ENCODE measurements at regions of chr1 and their contacts with region 1.

Region 1: GRCh38 chr1:153783233-153784190 is 8.3 kb downstream of the SLC27A3 start:
- DNase-seq: peak; percentile 84 to 96 (median 91)
- ATAC-seq: peak; percentile 98
- H3K4me3 ChIP-seq: peak overlapping the region; percentile 91 to 93
- H3K4me3 Mint-ChIP-seq: peak overlapping the region; percentile 88
- H3K27ac ChIP-seq: peak overlapping the region; percentile 92 to 99
- H3K27ac Mint-ChIP-seq: peak overlapping the region; percentile 95
- H3K4me1 ChIP-seq: peaks cover 12% of the 10 kb centered on the region
- H3K4me1 Mint-ChIP-seq: peaks cover 10% of the 10 kb centered on the region
- H3K27me3 ChIP-seq: no peaks in the 10 kb centered on the region
- H3K27me3 Mint-ChIP-seq: no peaks in the 10 kb centered on the region
- CTCF ChIP-seq: no peak

Region 2: DNA sequence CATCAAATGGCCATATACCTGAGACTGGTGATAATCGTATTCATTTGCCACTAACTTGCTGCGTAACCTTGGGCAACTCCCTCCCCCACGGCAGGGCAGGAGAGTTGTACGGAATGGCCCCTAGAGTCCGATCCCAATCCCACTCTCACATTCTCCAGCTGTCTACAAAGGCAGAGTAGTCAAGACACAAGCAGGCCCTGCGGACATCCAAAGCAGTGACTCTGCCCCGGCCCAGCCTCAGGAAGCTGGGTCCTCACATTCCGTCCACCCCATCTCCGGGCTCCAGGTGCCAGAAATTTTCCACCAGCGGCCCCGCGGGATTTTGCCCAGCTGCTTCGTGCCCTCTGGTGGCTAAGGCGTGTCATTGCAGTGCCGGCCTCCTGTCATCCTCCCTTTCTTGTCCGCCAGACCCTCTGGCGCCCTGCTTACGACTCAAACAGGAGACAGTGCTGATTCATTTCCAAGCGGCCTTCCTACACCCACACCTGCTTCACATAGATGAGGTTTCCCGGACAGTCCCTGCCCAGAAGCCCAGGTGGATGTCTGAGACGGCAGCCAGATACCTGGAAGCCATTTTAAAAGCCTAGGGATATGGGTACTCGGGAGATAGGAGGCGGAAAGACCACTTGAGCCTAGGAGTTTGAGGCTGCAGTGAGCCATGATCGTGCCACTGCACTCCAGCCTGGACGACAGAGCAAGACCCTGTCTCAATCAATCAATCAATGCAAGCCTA is 215.0 kb before region 1 on chr1:
- CTCF ChIA-PET with region 1: no interaction called
- POLR2A ChIA-PET with region 1: no interaction called
- intact Hi-C with region 1: no loop called
- DNase-seq: peak; percentile 63 to 89 (median 83)
- ATAC-seq: peak; percentile 66
- H3K4me3 ChIP-seq: no peak overlapping the region
- H3K4me3 Mint-ChIP-seq: peak overlapping the region; percentile 67
- H3K27ac ChIP-seq: no peak overlapping the region
- H3K27ac Mint-ChIP-seq: no peak overlapping the region
- H3K4me1 ChIP-seq: peaks cover 17% of the 10 kb centered on the region
- H3K4me1 Mint-ChIP-seq: peaks cover 26% of the 10 kb centered on the region
- H3K27me3 ChIP-seq: no peaks in the 10 kb centered on the region
- H3K27me3 Mint-ChIP-seq: peaks cover 8% of the 10 kb centered on the region
- CTCF ChIP-seq: peak; percentile 99

Region 3: DNA sequence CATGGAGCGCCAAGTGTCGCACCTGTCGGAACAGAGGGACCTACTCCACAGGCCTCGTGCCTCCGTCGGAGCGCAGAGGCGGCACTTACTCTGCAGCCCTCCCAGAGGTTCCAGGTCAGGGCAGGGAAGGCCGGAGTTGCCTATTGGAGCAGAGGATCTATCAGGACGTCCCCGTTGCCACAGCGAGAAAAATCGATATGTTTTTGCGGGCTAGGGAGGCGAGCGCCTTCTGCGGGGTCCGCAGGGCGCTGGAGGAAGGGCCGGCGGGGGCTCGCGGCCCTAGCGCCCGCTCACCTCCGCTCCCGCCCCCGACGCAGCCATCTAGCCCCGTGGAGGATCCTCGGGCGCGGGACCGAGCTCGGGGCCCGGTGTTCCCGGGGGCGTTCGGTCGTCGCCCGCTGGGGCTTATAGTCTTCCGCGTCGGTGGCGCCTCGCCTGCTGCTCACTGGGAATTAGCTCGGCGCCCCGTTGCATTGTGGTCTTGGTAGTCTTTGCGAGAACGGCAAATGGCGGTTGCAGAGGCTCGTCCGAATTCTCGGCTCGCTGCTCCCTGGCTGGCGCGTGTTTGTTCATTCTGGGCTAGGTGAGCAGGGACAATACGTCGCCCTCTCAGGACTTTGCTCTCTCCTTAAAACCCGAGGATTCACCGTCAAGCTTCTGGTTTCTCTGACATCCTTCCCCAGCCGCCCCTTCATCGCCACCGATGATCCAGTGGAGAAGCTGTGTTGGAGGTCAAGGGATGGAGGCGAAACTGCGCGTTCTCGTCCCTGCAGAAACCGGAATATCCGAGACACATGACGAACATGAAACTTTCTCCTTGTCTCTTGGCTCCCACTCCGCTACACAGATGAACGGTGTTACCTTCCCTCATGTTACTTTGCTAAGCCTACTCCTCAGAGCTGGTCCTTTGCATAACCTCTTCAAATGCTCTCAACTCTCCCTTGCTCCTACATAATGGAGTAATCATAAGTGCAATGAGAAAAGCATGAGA is 194.0 kb after region 1 on chr1 and contains the start of gene JTB:
- CTCF ChIA-PET with region 1: no interaction called
- POLR2A ChIA-PET with region 1: no interaction called
- intact Hi-C with region 1: loop called in 1 of 2 experiments (anchors 1 kb)
- DNase-seq: peak; percentile 62 to 91 (median 86)
- ATAC-seq: peak; percentile 95
- H3K4me3 ChIP-seq: peak within 1 kb of the TSS; percentile 92 to 97
- H3K4me3 Mint-ChIP-seq: peak within 1 kb of the TSS; percentile 97
- H3K27ac ChIP-seq: peak within 1 kb of the TSS; percentile 74 to 77
- H3K27ac Mint-ChIP-seq: peak within 1 kb of the TSS; percentile 96
- H3K4me1 ChIP-seq: peaks cover 20% of the 10 kb centered on the region
- H3K4me1 Mint-ChIP-seq: peaks cover 35% of the 10 kb centered on the region
- H3K27me3 ChIP-seq: no peaks in the 10 kb centered on the region
- H3K27me3 Mint-ChIP-seq: no peaks in the 10 kb centered on the region
- CTCF ChIP-seq: no peak
- total RNA-seq, gene JTB: 90.4 to 91.1 TPM